ENCODE measurements at regions of chr11 and their contacts with region 1.

Region 1: GRCh38 chr11:58579192-58580129 is 598 bp downstream of the ZFP91 start:
- DNase-seq: peak; percentile 93 to 99
- H3K4me3 ChIP-seq: peak overlapping the region; percentile 95
- CTCF ChIP-seq: peak in 1 of 3 donors; percentile 85
- POLR2A ChIP-seq: peak in 1 of 2 donors; percentile 39

Region 2: GRCh38 chr11:58629857-58630256 is 50.4 kb after region 1 on chr11:
- intact Hi-C with region 1: loop called (anchors 10 kb)
- DNase-seq: no peak
- H3K4me3 ChIP-seq: no peak overlapping the region
- CTCF ChIP-seq: no peak
- POLR2A ChIP-seq: no peak

Region 3: GRCh38 chr11:59053387-59053786 is 473.9 kb after region 1 on chr11:
- intact Hi-C with region 1: loop called (anchors 10 kb)
- DNase-seq: peak in 1 of 2 donors; percentile 91
- H3K4me3 ChIP-seq: no peak overlapping the region
- CTCF ChIP-seq: no peak
- POLR2A ChIP-seq: no peak

Measured in lower leg skin (tissue), 4 donors.